Activated CD4-positive, alpha-beta T cell treated with anti-CD3 and anti-CD28 coated beads for 36 hours (primary cell): ENCODE measurements at regions of chr5 and their contacts with region 1.

Region 1: DNA sequence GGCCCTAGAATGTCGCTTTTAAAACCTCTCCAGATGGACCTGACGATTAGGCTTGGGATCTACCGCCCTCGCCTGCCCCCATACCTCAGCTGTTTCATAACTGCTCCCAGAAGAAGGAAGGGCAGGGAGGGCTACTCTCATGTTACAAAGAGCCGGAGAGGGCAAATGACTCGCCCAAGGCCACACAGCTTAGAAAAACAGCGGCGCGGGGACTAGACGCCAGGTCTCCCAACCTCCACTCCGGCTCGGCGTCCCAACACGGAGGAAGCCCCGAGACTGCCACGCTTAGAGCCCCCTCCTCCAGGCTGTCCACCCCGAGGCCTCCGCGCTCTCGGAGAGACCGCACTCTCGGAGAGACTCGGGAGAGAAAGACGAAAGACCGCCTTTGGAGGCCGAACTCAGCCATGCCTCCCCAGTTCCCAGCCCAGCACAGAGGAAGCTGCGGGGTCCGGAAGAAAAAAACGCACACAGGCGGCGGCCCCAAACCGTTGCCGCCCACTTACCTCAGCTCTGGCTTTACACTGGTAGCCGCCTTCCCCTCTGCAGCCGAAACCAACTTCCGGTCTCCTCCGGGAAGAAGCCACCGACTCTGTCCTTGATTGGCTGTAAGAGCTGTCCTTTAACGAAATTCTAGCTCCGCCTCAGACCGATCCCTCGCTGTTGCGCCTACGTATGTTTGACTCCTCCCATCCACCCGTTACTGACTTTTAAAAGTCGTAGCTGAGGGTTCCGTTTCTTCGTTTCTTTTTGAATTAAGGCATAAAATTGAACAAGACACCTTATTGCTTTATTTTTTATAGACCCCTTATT is at the start of gene MED7:
- DNase-seq: peak; percentile 95
- ATAC-seq: peak; percentile 98
- H3K4me3 Mint-ChIP-seq: peak within 1 kb of the TSS; percentile 84
- H3K27ac Mint-ChIP-seq: peak within 1 kb of the TSS; percentile 99
- H3K4me1 Mint-ChIP-seq: peaks cover 46% of the 10 kb centered on the region
- H3K27me3 Mint-ChIP-seq: no peaks in the 10 kb centered on the region
- total RNA-seq, gene MED7: 10.0 to 16.9 TPM

Region 2: DNA sequence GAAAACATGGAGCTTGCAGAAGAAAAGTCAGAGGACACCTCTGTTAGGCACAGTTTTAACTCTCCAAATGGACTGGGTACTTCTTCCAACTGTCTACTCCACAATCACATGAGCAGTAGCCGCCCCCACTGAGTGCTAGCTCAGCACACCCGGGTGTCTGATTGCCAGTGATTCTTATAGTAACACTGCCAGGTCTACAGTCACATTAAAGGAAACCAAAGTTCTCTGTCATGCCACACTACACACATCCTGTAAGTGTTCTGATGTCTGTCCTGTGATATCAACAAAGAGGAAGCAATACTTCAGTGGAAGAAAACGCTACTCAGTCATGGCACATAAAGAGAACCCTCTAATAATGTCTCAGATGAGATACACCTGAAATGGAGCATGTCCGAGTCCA is 33.5 kb before region 1 on chr5 and contains the start of gene HAVCR2:
- CTCF ChIA-PET with region 1: interaction called, 3 read pairs
- POLR2A ChIA-PET with region 1: interaction called, 3 read pairs
- intact Hi-C with region 1: loop called in 1 of 2 experiments (anchors 2 kb)
- DNase-seq: peak; percentile 82
- ATAC-seq: peak; percentile 96
- H3K4me3 Mint-ChIP-seq: peak within 1 kb of the TSS; percentile 65
- H3K27ac Mint-ChIP-seq: peak within 1 kb of the TSS; percentile 97
- H3K4me1 Mint-ChIP-seq: peaks cover 45% of the 10 kb centered on the region
- H3K27me3 Mint-ChIP-seq: no peaks in the 10 kb centered on the region
- total RNA-seq, gene HAVCR2: 12.6 to 15.9 TPM

Region 3: GRCh38 chr5:157189223-157189622 is 46.7 kb after region 1 on chr5:
- CTCF ChIA-PET with region 1: interaction called, 28 read pairs
- POLR2A ChIA-PET with region 1: interaction called, 10 read pairs
- intact Hi-C with region 1: no loop called
- DNase-seq: peak; percentile 71
- ATAC-seq: peak; percentile 59
- H3K4me3 Mint-ChIP-seq: peak overlapping the region; percentile 93
- H3K27ac Mint-ChIP-seq: peak overlapping the region; percentile 96
- H3K4me1 Mint-ChIP-seq: peaks cover 75% of the 10 kb centered on the region
- H3K27me3 Mint-ChIP-seq: no peaks in the 10 kb centered on the region

Region 4: GRCh38 chr5:157198277-157198986 is 55.9 kb after region 1 on chr5:
- CTCF ChIA-PET with region 1: interaction called, 20 read pairs
- POLR2A ChIA-PET with region 1: interaction called, 15 read pairs
- intact Hi-C with region 1: no loop called
- DNase-seq: peak; percentile 75
- ATAC-seq: peak; percentile 78
- H3K4me3 Mint-ChIP-seq: peak overlapping the region; percentile 66
- H3K27ac Mint-ChIP-seq: peak overlapping the region; percentile 98
- H3K4me1 Mint-ChIP-seq: peaks cover 94% of the 10 kb centered on the region
- H3K27me3 Mint-ChIP-seq: no peaks in the 10 kb centered on the region

Region 5: DNA sequence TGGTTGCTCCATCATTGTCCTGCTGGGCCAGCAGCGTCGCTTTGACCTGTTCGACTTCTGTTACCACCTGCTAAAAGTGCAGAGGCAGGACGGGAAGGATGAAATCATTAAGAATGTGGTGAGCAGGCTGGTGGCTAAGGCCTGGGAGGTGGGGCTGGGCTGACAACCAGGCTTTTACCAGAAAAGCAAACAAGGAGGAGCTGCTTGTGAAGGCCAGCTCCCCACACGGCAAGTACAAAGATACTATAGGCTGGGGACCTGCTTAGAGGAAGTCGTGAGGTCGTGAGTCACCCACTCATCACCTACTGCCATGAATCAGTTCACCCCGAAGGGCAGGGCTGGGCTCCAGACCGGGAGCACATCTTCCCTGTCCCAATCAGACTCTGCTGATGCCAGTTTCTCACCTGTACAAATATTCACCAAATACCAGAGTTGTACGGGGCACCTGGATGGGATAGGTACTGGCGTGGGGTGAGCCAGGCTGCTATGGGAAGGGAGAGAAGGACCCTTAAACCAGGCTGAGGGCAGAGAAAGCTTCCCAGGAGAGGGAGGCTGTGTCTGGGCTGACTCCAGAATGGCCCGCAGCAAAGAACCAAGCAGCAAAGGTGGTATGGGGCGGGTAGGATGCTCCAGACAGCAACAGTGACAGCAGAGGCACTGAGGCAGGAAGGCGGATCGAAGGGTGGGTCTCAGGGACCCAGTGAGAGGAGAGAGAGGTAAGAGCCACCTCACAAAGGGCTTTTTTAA is 248.2 kb after region 1 on chr5:
- CTCF ChIA-PET with region 1: no interaction called
- POLR2A ChIA-PET with region 1: interaction called, 6 read pairs
- intact Hi-C with region 1: loop called in 1 of 2 experiments (anchors 5 kb)
- DNase-seq: peak; percentile 88
- ATAC-seq: peak; percentile 98
- H3K4me3 Mint-ChIP-seq: peak overlapping the region; percentile 12
- H3K27ac Mint-ChIP-seq: peak overlapping the region; percentile 96
- H3K4me1 Mint-ChIP-seq: peaks cover 24% of the 10 kb centered on the region
- H3K27me3 Mint-ChIP-seq: no peaks in the 10 kb centered on the region